ENCODE measurements at regions of chr22 and their contacts with region 1.

Region 1: DNA sequence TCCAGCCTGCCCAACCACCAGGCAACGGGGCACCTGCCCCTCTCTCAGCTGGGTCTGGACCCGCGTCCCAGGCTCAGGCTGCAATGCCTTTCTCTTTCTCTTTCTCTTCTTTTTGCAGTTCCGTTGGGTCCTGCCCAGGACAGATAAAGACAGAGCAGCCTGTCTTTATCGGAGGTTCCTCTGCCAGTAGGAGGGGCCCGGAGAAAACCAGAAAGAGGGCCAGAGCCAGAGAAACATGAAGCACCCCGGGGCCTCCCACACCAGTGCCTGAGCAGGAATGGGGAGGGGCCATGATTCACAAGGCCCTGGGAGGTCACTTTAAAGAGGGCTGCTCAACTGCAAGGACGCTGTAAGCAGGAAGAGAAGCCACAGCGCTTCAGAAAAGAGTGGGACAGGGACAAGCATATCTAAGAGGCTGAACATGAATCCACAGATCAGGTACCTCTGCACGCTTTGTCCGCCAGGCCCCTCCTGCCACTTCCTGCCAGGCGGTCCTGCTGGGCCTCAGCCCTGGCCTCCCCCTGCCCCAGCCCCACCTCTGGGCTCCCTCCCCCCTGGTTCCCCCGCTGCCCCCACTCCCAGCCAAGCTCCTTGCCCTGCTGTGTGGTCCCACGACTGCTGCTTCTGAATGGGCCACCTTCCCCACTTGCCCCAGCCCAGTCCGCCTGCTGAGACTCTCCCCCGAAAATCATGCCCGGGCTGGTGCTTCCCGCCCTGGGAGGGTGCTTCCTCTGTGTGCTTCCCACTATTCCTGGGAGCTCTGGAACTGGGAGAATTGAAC is at the start of gene APOBEC3C:
- DNase-seq: peak; percentile 80
- H3K4me3 Mint-ChIP-seq: peak within 1 kb of the TSS; percentile 98
- H3K27ac Mint-ChIP-seq: peak within 1 kb of the TSS; percentile 91
- H3K4me1 Mint-ChIP-seq: peaks cover 25% of the 10 kb centered on the region
- H3K27me3 Mint-ChIP-seq: peaks cover 4% of the 10 kb centered on the region
- total RNA-seq, gene APOBEC3C: 71.5 and 73.2 TPM in 2 replicates

Region 2: GRCh38 chr22:39039306-39040126 is 25.4 kb after region 1 on chr22:
- intact Hi-C with region 1: loop called (anchors 2 kb)
- DNase-seq: no peak
- H3K4me3 Mint-ChIP-seq: peak overlapping the region; percentile 74
- H3K27ac Mint-ChIP-seq: peak overlapping the region; percentile 81
- H3K4me1 Mint-ChIP-seq: peaks cover 27% of the 10 kb centered on the region
- H3K27me3 Mint-ChIP-seq: peaks cover 1% of the 10 kb centered on the region

Region 3: DNA sequence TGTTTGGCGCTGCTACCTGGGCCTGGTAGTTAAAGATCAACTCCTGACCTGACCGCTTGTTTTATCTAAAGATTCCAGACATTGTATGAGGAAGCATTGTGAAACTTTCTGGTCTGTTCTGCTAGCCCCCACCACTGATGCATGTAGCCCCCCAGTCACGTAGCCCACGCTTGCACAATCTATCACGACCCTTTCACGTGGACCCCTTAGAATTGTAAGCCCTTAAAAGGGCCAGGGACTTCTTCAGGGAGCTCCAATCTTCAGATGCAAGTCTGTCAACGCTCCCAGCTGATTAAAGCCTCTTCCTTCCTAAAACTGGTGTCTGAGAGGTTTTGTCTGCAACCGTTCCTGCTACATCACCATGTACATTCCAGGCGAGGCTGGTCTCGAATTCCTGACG is 41.5 kb after region 1 on chr22:
- intact Hi-C with region 1: no loop called
- DNase-seq: no peak
- H3K4me3 Mint-ChIP-seq: no peak overlapping the region
- H3K27ac Mint-ChIP-seq: no peak overlapping the region
- H3K4me1 Mint-ChIP-seq: no peaks in the 10 kb centered on the region
- H3K27me3 Mint-ChIP-seq: no peaks in the 10 kb centered on the region

Region 4: DNA sequence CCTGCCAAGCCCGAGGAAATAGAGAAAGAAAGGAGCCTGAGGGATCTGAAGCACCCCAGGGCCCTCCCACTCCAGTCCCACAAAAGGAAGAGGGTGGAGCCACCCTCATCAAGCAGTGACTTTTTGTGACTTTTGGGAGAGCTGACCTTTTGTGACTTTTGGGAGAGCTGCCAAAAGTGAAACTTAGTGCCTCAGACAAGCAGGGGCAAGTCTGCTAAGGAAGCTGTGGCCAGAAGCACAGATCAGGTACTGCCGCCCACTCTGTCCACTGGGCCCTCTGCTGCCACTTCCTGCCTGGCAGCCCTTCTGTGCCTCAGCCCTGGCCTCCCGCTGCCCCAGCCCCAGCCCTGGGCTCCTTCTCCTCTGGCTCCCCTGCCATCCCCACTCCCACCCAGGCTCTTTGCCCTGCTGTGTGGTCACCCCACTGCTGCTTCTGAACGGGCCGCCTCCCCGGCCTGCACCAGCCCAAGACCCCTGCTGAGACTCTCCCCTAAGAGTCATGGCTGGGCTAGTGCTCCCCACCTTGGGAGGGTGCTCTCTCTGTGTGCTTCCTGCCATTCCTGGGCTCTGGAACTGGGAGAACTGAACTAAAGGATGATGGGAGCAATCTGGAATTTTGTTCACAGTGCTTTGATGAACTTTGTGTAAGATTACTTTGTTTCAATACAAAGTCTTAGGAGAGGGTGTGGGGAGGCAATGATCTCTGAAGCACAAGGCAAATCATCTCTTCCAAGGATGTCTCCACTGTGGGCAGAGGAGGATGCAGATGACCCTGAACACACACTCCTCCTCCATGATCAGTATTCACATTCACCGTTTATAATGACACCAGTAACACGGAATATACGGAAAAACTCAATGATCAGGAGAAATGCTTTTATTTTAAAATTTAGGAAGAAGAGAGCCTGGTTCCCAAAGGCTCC is 83.2 kb after region 1 on chr22 and contains the start of gene APOBEC3H:
- intact Hi-C with region 1: loop called (anchors 5 kb)
- DNase-seq: peak; percentile 32
- H3K4me3 Mint-ChIP-seq: peak within 1 kb of the TSS; percentile 83
- H3K27ac Mint-ChIP-seq: peak within 1 kb of the TSS; percentile 96
- H3K4me1 Mint-ChIP-seq: peaks cover 78% of the 10 kb centered on the region
- H3K27me3 Mint-ChIP-seq: no peaks in the 10 kb centered on the region
- total RNA-seq, gene APOBEC3H: 5.0 and 7.4 TPM in 2 replicates

Region 5: DNA sequence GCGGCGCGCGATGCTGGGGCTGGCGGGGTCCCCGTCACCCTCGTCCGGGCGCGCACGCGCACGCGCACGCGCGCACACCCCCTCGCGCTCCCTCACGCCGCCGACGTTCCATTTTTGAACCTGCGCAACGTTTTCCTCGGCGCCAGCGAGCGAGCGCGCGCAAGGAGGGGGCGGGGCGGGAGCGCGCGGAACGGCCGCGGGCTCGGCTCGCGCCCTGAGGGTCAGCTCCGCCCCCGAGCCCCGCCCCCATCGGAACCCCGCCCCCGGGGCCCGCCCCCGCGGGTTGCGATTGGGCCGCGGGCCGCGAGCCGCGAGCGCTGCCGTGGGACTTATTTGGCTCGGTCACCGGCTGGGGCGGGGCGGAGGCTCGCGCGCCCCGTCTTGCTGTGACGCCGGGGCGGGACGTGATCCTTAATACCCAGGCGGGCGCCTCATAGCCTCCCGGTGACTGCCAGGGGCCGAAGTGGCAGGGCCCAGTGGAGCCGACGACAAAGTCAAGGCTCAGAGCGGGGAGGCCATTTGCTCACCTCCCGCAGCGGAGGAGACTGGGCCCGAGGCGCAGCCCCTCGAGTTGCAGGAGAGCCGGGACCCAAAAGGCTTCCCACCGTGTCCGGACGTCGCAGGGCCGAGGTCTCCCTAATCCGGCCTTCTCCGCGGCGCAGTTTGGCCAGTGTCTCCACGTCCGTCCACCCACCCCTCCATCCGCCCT is 138.5 kb after region 1 on chr22 and contains the start of gene CBX7:
- intact Hi-C with region 1: loop called (anchors 2 kb)
- DNase-seq: peak; percentile 93
- H3K4me3 Mint-ChIP-seq: peak within 1 kb of the TSS; percentile 89
- H3K27ac Mint-ChIP-seq: peak within 1 kb of the TSS; percentile 74
- H3K4me1 Mint-ChIP-seq: peaks cover 32% of the 10 kb centered on the region
- H3K27me3 Mint-ChIP-seq: peaks cover 23% of the 10 kb centered on the region
- total RNA-seq, gene CBX7: 12.7 and 13.8 TPM in 2 replicates

Measured in activated T-helper 1 cell treated with anti-CD3 and anti-CD28 coated beads, Interleukin-12 subunit alpha, Interleukin-12 subunit beta, Interleukin-2, Interleukin-4 antibody, amounts not matched to agents 30 ng/mL and 10 ng/mL and 1 ng/mL, durations not matched to agents 14 hours and 24 hours and 36 hours (primary cell).